ENCODE measurements at regions of chr16 and their contacts with region 1.

Region 1: DNA sequence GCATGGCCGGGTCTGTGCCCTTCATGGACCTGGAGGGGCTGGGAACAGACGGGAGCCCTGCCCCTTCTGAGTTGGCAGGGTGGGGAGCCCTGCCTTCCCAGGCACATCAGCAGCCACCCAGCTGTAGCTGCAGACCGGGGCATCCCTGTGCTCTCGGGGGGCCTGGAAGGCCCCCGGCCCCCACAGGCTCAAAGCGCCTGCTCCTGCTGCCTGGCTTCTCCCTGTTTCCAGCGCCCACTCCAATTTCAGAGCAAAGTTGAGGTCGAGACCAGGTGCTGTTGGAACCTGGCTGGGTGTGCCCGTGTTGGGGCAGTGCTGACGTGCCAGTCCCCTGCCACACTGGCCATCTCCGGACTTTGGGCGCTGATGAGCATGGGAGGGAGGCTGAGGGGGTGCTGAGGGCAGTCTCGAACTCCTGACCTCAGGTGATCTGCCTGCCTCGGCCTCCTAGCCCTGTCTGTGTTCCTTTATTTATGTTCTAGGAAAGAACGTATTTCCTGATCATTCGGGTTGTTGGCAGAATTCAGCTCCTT is 4.9 kb upstream of the PRSS27 start:
- DNase-seq: no peak
- H3K4me3 Mint-ChIP-seq: no peak overlapping the region
- H3K27ac Mint-ChIP-seq: no peak overlapping the region
- H3K4me1 Mint-ChIP-seq: peaks cover 12% of the 10 kb centered on the region
- H3K27me3 Mint-ChIP-seq: peaks cover 20% of the 10 kb centered on the region
- CTCF ChIP-seq: no peak

Region 2: DNA sequence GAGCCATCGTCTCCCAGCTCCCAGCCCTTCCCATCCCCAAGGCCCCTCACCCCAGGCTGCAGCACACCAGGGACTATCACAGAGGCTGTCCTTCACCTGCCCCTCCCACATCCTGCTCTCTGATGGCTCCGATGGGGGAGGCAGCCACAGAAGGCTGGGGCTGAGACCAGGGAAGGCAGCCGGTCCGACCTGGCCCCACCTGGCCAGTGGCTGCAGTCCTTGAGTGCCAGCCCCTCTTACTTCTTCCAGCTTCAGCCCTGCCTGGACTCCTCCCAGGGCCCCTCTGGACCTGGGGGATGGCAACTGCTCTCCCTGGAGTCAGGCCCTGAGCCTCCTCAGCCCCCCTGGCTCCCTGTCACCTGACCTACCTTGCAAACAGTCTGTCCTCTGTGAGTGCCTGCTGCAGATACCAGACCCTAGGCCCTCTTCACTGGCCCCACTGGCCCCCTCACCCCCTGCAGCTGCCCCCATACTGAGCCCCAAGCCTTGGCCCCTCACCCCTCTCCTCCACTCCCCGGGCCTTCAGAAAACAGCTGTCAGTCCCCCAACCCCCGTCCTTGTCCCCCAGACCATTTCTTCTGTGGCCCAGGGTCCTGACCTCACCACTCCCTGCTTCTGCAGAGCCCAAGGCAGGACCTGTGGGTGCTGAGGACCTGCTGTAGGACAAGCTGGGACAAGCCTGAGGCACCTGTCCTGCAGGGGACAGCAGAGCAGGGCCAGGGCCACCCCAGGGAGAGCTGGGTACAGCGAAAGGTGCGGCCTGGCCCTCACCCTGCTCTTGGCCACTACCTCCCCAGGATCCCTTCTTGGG is 14.9 kb after region 1 on chr16:
- CTCF ChIA-PET with region 1: interaction called, 10 read pairs
- intact Hi-C with region 1: no loop called
- DNase-seq: no peak
- H3K4me3 Mint-ChIP-seq: no peak overlapping the region
- H3K27ac Mint-ChIP-seq: no peak overlapping the region
- H3K4me1 Mint-ChIP-seq: no peaks in the 10 kb centered on the region
- H3K27me3 Mint-ChIP-seq: peaks cover 35% of the 10 kb centered on the region
- CTCF ChIP-seq: no peak

Measured in Calu3 (cell line).